Aorta (tissue), 5 donors: ENCODE measurements at regions of chr19 and their contacts with region 1.

Region 1: GRCh38 chr19:54297760-54298305 is 15.1 kb downstream of the LILRA5 start:
- DNase-seq: no peak
- ATAC-seq: no peak
- H3K4me3 ChIP-seq: no peak overlapping the region
- H3K27ac ChIP-seq: no peak overlapping the region
- H3K4me1 ChIP-seq: no peaks in the 10 kb centered on the region
- H3K27me3 ChIP-seq: no peaks in the 10 kb centered on the region

Region 2: DNA sequence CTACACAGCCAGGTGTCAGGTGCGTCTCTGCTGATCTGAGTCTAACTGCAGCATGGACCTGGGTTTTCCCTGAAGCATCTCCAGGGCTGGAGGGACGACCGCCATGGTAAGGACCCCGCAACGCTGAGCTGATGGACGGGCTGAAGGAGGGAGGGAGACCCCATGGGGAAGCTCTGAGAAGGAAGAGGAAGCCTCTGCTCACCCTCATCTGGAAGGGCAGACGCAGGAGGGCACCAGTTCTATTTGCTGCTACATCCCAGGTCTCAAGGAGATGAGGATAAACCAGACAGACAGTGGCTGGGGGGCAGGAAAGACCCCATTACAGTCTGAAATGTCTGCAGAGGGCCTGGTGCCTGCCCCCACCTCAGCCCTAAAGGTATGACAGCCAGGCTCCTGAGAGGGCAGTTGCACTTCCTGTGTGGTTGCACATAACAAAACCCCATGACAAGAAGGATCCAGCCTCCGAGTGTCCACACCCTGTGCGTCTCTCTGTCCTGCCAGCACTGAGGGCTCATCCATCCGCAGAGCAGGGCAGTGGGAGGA is 275.6 kb after region 1 on chr19 and contains the start of gene LILRA2:
- intact Hi-C with region 1: loop called in 1 of 2 experiments (anchors 10 kb)
- DNase-seq: no peak
- ATAC-seq: peak; percentile 43
- H3K4me3 ChIP-seq: no peak within 1 kb of the TSS
- H3K27ac ChIP-seq: no peak within 1 kb of the TSS
- H3K4me1 ChIP-seq: no peaks in the 10 kb centered on the region
- H3K27me3 ChIP-seq: no peaks in the 10 kb centered on the region
- total RNA-seq, gene LILRA2: 3.5 to 3.7 TPM